Gastrocnemius medialis (tissue), 4 donors: ENCODE measurements at regions of chr14 and their contacts with region 1.

Region 1: GRCh38 chr14:49019467-49020115 is 566.6 kb downstream of the RPS29 start:
- DNase-seq: no peak
- ATAC-seq: no peak
- H3K4me3 ChIP-seq: no peak overlapping the region
- H3K27ac ChIP-seq: no peak overlapping the region
- H3K4me1 ChIP-seq: no peaks in the 10 kb centered on the region
- H3K27me3 ChIP-seq: no peaks in the 10 kb centered on the region
- CTCF ChIP-seq: no peak
- POLR2A ChIP-seq: no peak

Region 2: GRCh38 chr14:48890333-48890732 is 129.3 kb before region 1 on chr14:
- in situ Hi-C with region 1: no loop called
- intact Hi-C with region 1: loop called (anchors 10 kb)
- DNase-seq: no peak
- ATAC-seq: no peak
- H3K4me3 ChIP-seq: no peak overlapping the region
- H3K27ac ChIP-seq: no peak overlapping the region
- H3K4me1 ChIP-seq: no peaks in the 10 kb centered on the region
- H3K27me3 ChIP-seq: no peaks in the 10 kb centered on the region
- CTCF ChIP-seq: no peak
- POLR2A ChIP-seq: no peak

Region 3: DNA sequence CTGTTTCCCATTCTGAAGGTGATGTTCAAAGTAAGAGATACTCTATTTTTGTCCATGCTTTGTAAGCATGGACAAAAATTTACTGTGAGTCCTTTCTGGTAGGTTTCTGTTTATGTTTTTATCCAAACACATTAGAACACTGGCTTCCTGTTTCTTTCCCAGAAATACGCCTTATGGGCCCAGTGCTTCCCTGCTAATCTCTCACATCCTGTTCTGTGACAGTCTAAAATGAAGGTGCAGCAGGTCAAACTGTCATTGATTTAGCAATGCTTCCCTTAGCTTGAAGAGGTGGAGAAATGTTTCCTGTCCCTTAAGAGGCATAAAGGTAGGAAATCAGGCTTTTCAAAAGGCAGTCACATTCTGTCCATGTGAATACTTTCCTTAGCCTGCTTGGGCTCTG is 261.0 kb after region 1 on chr14:
- in situ Hi-C with region 1: no loop called
- intact Hi-C with region 1: no loop called
- DNase-seq: no peak
- ATAC-seq: no peak
- H3K4me3 ChIP-seq: no peak overlapping the region
- H3K27ac ChIP-seq: no peak overlapping the region
- H3K4me1 ChIP-seq: no peaks in the 10 kb centered on the region
- H3K27me3 ChIP-seq: no peaks in the 10 kb centered on the region
- CTCF ChIP-seq: no peak
- POLR2A ChIP-seq: no peak